Endothelial cell of umbilical vein (primary cell): ENCODE measurements at regions of chr16 and their contacts with region 1.

Region 1: DNA sequence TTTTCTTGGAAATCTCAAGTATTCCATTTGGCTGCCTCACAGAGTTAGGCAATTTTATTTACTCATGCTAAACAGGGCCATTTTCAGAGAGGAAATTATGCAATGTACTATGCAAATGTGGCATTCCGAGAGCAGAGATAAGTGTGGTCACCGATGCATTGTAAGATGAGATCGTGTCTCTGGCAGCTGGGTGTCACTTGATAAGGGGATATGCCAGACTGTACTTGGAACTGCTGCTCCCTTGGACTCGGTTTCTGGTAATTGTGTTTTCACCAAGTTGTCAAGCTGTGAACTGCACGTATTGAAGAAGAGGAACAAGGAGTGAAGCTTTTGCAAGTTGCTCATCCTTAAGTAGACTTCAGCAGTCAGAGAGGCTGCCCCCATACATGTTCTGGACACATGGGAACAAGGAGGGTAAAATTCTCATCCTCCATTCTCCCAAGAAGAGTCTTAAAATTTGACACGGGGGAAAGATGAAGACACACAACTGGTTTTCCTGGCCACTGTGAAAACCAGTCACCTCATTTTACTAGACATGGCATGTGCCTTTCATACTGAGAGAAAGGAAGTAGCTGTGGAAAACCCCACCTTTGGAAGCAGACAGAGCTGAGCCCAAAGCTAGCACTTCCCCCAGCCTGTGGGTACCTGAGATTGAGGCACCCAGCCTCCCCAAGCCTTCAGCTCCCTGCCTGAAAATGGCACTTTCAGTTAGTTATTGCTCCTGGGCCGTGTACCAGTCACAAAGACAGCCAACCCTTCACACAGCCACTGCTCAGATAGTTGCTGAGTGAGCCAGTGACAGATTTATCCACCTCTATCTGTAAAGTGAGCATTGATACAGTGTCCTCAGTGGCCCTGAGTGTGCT is 150.7 kb downstream of the SOCS1 start:
- DNase-seq: peak; percentile 56
- H3K4me3 ChIP-seq: no peak overlapping the region
- H3K27ac ChIP-seq: no peak overlapping the region
- H3K4me1 ChIP-seq: peaks cover 17% of the 10 kb centered on the region
- H3K27me3 ChIP-seq: no peaks in the 10 kb centered on the region
- CTCF ChIP-seq: no peak
- POLR2A ChIP-seq: no peak

Region 2: GRCh38 chr16:10922328-10923145 is 182.7 kb before region 1 on chr16:
- CTCF ChIA-PET with region 1: no interaction called
- POLR2A ChIA-PET with region 1: no interaction called
- dilution Hi-C with region 1: no loop called
- intact Hi-C with region 1: no loop called
- DNase-seq: no peak
- H3K4me3 ChIP-seq: no peak overlapping the region
- H3K27ac ChIP-seq: no peak overlapping the region
- H3K4me1 ChIP-seq: no peaks in the 10 kb centered on the region
- H3K27me3 ChIP-seq: no peaks in the 10 kb centered on the region
- CTCF ChIP-seq: no peak
- POLR2A ChIP-seq: no peak

Region 3: GRCh38 chr16:10957771-10958486 is 147.3 kb before region 1 on chr16:
- CTCF ChIA-PET with region 1: no interaction called
- POLR2A ChIA-PET with region 1: no interaction called
- dilution Hi-C with region 1: no loop called
- intact Hi-C with region 1: loop called (anchors 1 kb)
- DNase-seq: peak; percentile 66
- H3K4me3 ChIP-seq: no peak overlapping the region
- H3K27ac ChIP-seq: peak overlapping the region; percentile 40
- H3K4me1 ChIP-seq: peaks cover 37% of the 10 kb centered on the region
- H3K27me3 ChIP-seq: no peaks in the 10 kb centered on the region
- CTCF ChIP-seq: no peak
- POLR2A ChIP-seq: no peak

Region 4: DNA sequence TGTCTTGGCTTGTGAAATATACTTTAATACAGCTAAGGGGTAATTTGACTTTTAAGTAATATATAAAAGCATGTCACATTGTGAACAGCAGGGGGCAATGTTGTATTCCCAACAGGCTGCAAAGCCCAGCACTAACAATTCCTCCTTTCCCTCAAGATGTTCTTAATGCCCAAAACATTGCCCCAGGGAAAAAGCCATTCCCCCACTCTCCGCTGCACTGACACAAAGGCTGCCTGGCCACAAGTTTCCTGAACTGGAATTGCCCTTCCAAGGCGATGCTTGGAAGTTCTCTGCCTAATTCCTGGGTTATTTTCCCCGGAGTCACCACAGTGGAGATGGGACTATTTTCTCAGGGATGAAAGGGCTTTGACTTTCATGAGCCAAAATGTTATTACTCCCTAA is 133.7 kb before region 1 on chr16:
- CTCF ChIA-PET with region 1: interaction called, 8 read pairs
- POLR2A ChIA-PET with region 1: no interaction called
- dilution Hi-C with region 1: no loop called
- intact Hi-C with region 1: loop called (anchors 5 kb)
- DNase-seq: peak; percentile 73
- H3K4me3 ChIP-seq: no peak overlapping the region
- H3K27ac ChIP-seq: no peak overlapping the region
- H3K4me1 ChIP-seq: no peaks in the 10 kb centered on the region
- H3K27me3 ChIP-seq: no peaks in the 10 kb centered on the region
- CTCF ChIP-seq: peak; percentile 56 to 57
- POLR2A ChIP-seq: no peak

Region 5: GRCh38 chr16:11032922-11033291 is 72.4 kb before region 1 on chr16:
- CTCF ChIA-PET with region 1: no interaction called
- POLR2A ChIA-PET with region 1: no interaction called
- dilution Hi-C with region 1: no loop called
- intact Hi-C with region 1: no loop called
- DNase-seq: no peak
- H3K4me3 ChIP-seq: no peak overlapping the region
- H3K27ac ChIP-seq: no peak overlapping the region
- H3K4me1 ChIP-seq: no peaks in the 10 kb centered on the region
- H3K27me3 ChIP-seq: no peaks in the 10 kb centered on the region
- CTCF ChIP-seq: no peak
- POLR2A ChIP-seq: no peak

Region 6: GRCh38 chr16:11133344-11133943 is 28.2 kb after region 1 on chr16:
- CTCF ChIA-PET with region 1: interaction called, 6 read pairs
- POLR2A ChIA-PET with region 1: no interaction called
- dilution Hi-C with region 1: no loop called
- intact Hi-C with region 1: loop called (anchors 1 kb)
- DNase-seq: peak; percentile 83
- H3K4me3 ChIP-seq: no peak overlapping the region
- H3K27ac ChIP-seq: peak overlapping the region; percentile 62
- H3K4me1 ChIP-seq: peaks cover 27% of the 10 kb centered on the region
- H3K27me3 ChIP-seq: no peaks in the 10 kb centered on the region
- CTCF ChIP-seq: no peak
- POLR2A ChIP-seq: no peak

Region 7: GRCh38 chr16:11139326-11140097 is 34.2 kb after region 1 on chr16:
- CTCF ChIA-PET with region 1: interaction called, 5 read pairs
- POLR2A ChIA-PET with region 1: no interaction called
- dilution Hi-C with region 1: no loop called
- intact Hi-C with region 1: loop called (anchors 1 kb)
- DNase-seq: no peak
- H3K4me3 ChIP-seq: no peak overlapping the region
- H3K27ac ChIP-seq: peak overlapping the region; percentile 33
- H3K4me1 ChIP-seq: peaks cover 36% of the 10 kb centered on the region
- H3K27me3 ChIP-seq: no peaks in the 10 kb centered on the region
- CTCF ChIP-seq: no peak
- POLR2A ChIP-seq: no peak

Region 8: GRCh38 chr16:11201498-11202259 is 96.4 kb after region 1 on chr16:
- CTCF ChIA-PET with region 1: interaction called, 6 read pairs
- POLR2A ChIA-PET with region 1: no interaction called
- dilution Hi-C with region 1: no loop called
- intact Hi-C with region 1: loop called (anchors 1 kb)
- DNase-seq: peak; percentile 87
- H3K4me3 ChIP-seq: no peak overlapping the region
- H3K27ac ChIP-seq: peak overlapping the region; percentile 79
- H3K4me1 ChIP-seq: peaks cover 19% of the 10 kb centered on the region
- H3K27me3 ChIP-seq: no peaks in the 10 kb centered on the region
- CTCF ChIP-seq: no peak
- POLR2A ChIP-seq: no peak